ENCODE measurements at regions of chr22 and their contacts with region 1.

Region 1: GRCh38 chr22:20758688-20759087 is 15.2 kb upstream of the SERPIND1 start:
- DNase-seq: peak in 1 of 4 experiments; percentile 64
- ATAC-seq: peak; percentile 86
- H3K4me3 ChIP-seq: no peak overlapping the region
- H3K27ac ChIP-seq: no peak overlapping the region
- H3K4me1 ChIP-seq: no peaks in the 10 kb centered on the region
- H3K27me3 ChIP-seq: no peaks in the 10 kb centered on the region
- CTCF ChIP-seq: peak; percentile 64 to 76 (median 75)
- EP300 ChIP-seq: no peak
- POLR2A ChIP-seq: no peak
- RAD21 ChIP-seq: peak in 1 of 2 experiments; percentile 59; a peak in 2 of 4 replicates

Region 2: GRCh38 chr22:20663137-20663828 is 95.4 kb before region 1 on chr22:
- CTCF ChIA-PET with region 1: no interaction called
- POLR2A ChIA-PET with region 1: no interaction called
- in situ Hi-C with region 1: no loop called
- intact Hi-C with region 1: no loop called
- DNase-seq: no peak
- ATAC-seq: no peak
- H3K4me3 ChIP-seq: no peak overlapping the region
- H3K27ac ChIP-seq: no peak overlapping the region
- H3K4me1 ChIP-seq: no peaks in the 10 kb centered on the region
- H3K27me3 ChIP-seq: peaks cover 25% of the 10 kb centered on the region in 2 experiments
- CTCF ChIP-seq: no peak
- EP300 ChIP-seq: no peak
- POLR2A ChIP-seq: no peak
- RAD21 ChIP-seq: no peak

Region 3: GRCh38 chr22:20721409-20722218 is 37.1 kb before region 1 on chr22:
- CTCF ChIA-PET with region 1: no interaction called
- POLR2A ChIA-PET with region 1: interaction called, 4 read pairs
- in situ Hi-C with region 1: no loop called
- intact Hi-C with region 1: loop called (anchors 5 kb)
- DNase-seq: peak in 1 of 4 experiments; percentile 23
- ATAC-seq: peak; percentile 16
- H3K4me3 ChIP-seq: no peak overlapping the region
- H3K27ac ChIP-seq: no peak overlapping the region
- H3K4me1 ChIP-seq: peaks cover 0 to 8% of the 10 kb centered on the region in 2 experiments; a peak in 2 of 5 replicates
- H3K27me3 ChIP-seq: no peaks in the 10 kb centered on the region
- CTCF ChIP-seq: no peak
- EP300 ChIP-seq: no peak
- POLR2A ChIP-seq: peak; percentile 32; the same call in 1 of the 2 replicates
- RAD21 ChIP-seq: no peak

Region 4: DNA sequence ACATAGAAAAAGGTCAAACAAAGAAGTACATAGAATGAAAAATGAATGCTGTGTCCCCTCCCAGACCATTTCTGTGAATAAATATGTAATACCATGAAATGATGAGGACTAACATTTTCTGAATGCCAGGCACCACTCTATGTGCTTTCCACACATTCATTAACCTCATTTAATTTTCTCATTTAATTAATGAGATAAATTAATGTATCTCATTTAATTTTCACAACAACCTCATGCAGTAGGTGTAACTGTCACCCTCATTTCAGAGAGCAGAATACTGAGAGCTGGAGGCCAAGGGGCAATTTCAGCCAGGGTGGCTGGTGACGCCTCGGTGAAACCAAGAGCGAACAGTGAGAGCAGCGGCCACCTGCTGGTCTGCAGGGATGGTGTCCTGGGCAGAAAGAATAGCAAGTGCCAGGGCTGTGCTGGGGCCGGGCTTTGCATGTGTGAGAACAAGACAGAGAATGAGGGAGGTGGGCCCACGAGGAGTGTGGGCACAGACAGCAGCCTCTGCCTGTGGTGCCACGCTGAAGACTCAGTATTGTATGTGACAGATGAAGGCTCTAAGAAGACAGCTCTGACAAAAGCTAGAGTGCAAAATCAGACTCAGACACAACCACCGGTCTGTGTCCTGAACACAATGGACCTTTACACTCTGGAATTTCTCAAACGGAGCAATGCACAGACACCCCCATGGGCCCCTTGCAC is 13.4 kb after region 1 on chr22:
- CTCF ChIA-PET with region 1: no interaction called
- POLR2A ChIA-PET with region 1: interaction called, 27 read pairs
- in situ Hi-C with region 1: no loop called
- intact Hi-C with region 1: no loop called
- DNase-seq: no peak
- ATAC-seq: peak; percentile 50
- H3K4me3 ChIP-seq: no peak overlapping the region
- H3K27ac ChIP-seq: no peak overlapping the region
- H3K4me1 ChIP-seq: peaks cover 13 to 15% of the 10 kb centered on the region in 2 experiments
- H3K27me3 ChIP-seq: no peaks in the 10 kb centered on the region
- CTCF ChIP-seq: peak; percentile 38 to 60 (median 60)
- EP300 ChIP-seq: no peak
- POLR2A ChIP-seq: no peak
- RAD21 ChIP-seq: no peak